ENCODE measurements at regions of chr10 and their contacts with region 1.

Region 1: DNA sequence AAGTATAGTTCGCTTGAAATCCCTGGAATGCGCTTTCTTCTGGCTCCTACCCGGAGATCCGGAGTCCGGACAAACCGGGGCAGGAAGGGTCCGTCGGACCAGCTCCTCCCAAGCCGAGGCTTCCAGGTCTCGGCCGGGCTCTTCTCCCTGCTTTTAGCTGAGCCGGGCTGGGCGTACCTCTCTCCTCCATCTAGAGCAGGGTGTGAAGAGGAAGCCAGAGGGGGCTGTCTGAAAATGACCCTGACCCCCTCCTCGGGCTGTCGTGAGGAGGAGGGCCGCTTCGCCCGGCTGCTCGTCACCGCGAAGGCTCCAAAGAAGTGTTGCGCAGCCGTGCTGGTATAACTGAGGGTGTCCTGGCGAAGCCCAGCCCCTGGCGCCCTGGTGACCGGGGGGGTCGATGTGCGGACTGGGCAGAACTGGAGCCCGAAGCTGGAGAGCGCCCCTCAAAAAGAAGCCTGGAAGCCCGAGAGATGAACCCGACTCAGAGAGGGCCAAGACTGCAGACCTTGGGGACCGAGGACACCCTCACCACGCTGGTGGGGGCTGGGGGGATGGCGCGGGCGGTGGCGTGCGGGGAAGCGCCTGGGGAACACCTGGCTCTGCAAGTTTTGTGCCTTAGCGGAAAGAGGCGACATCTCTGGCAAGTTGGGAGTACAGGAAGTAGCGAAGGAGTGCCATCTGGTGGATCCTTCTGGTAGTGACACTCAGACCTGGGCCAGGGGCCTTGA is 5.7 kb downstream of the KAZALD1 start:
- DNase-seq: peak; percentile 78
- ATAC-seq: peak; percentile 73
- H3K4me3 ChIP-seq: peak overlapping the region; percentile 60
- H3K27ac ChIP-seq: peak overlapping the region; percentile 42
- H3K4me1 ChIP-seq: peaks cover 40% of the 10 kb centered on the region
- H3K27me3 ChIP-seq: no peaks in the 10 kb centered on the region
- CTCF ChIP-seq: peak; percentile 90

Region 2: DNA sequence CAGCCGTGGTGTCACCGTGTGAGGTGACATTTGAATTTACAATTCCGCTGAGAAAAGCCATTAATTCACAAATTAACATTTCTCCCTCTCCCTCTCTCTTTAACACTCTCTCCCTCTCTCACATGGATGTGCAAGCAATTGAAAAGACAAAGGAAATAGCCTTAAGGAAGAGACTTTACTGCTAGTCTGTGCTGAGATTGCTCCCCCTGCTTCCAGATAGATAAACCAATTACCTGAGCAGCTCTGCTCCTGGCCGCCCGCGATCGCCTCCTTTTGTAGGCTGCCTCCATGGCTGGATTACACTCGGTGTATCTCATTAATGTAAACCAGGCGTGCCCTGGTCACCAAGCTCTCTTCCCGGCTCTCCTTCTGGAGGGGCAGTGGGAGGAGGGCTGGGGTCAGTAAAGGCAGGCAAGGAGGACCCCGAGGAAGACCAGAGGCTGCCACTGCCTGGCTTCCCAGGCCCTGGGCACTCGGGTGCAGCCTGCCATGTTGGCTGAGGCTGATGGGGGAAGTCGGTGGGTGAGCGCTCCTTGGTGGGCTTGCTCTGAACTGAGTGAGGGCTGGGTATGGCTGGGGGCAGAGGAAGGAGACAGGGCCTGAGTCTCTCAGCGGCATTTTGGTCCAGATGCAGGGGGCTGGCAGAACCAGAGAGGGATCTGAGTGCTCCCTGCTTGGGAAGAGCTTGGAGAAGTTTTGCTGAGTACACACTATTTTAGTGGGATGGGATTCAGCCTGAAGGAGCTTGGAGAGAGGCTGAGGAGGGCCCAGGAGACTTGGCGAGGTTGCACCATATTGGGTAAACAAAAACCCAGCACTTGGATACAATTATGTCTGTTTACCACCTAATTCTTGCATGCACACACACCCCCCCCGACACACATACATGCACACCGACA is 279.3 kb before region 1 on chr10:
- intact Hi-C with region 1: no loop called
- DNase-seq: peak; percentile 60
- ATAC-seq: no peak
- H3K4me3 ChIP-seq: no peak overlapping the region
- H3K27ac ChIP-seq: no peak overlapping the region
- H3K4me1 ChIP-seq: no peaks in the 10 kb centered on the region
- H3K27me3 ChIP-seq: peaks cover 6% of the 10 kb centered on the region
- CTCF ChIP-seq: no peak

Region 3: DNA sequence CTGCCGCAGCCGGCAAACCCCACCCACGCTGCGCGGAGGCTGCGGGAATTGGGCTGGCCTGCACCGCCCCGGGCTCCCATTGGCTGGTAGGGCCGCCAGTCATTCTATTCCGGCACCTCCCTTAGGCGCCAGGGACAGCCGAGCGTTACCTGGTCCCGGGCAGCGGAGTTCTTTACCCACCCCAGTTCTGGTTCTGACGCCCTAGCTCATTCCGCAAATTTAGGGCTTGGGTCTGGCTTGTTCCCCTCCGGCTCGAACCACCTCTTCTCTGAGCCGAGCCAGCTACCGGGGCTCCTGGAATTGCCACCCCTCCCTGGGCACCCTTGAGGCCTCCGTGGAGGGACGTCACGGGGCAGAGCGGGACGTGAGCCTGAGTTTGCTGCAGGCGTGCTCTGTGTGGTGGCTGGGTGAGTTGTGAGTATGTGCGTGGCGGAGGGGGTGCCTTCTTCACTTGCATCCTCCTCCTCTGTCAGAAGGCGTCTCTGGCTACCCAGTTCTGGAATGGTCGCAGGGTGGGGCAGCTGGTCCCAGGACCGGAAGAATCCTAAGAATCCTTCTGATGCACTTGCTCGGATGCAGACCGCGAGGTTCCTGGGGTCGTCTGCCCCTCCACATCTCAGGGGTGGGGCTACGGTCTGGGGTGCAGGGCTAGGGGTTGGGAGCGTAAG is 36.3 kb before region 1 on chr10 and contains the starts of genes PDZD7 and SFXN3:
- intact Hi-C with region 1: loop called (anchors 5 kb)
- DNase-seq: peak; percentile 99
- ATAC-seq: peak; percentile 91
- H3K4me3 ChIP-seq: peak within 1 kb of the TSS; percentile 89
- H3K27ac ChIP-seq: peak within 1 kb of the TSS; percentile 94
- H3K4me1 ChIP-seq: peaks cover 13% of the 10 kb centered on the region
- H3K27me3 ChIP-seq: no peaks in the 10 kb centered on the region
- CTCF ChIP-seq: no peak
- total RNA-seq, gene PDZD7: 1.6 TPM
- total RNA-seq, gene SFXN3: 49.2 TPM